ENCODE measurements at regions of chr15 and their contacts with region 1.

Region 1: DNA sequence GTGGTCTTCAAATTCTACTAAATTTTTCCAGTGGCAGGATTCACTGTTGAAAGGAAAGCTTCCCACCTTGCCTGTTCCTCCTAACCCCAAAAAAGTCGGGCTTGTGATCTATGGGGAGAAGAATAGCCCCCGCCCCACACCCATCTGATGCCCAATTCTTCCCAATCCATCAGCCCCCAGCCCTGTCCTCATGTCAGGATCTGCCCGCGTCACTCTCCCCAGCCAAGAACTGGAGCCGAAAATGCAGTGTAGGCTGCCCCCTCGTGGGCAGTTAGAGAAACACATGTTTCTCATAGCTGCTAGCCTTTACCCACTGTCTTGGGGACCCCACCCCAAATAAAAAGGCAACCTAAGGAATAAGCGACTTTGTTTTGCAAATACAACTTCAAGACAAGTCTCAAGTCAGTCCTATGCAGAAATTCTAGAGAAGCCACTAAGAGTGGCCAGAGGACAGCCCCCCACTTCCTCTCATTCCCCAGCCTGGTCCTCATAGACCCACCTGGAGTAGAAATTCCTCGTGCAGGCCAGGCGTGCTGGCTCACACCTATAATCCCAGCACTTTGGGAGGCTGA is 13.0 kb upstream of the CSK start:
- DNase-seq: peak; percentile 57 to 83 (median 68)
- ATAC-seq: peak; percentile 38 to 65 (median 56)
- H3K4me3 ChIP-seq: peak overlapping the region in 2 of 12 donors; percentile 20 to 27
- H3K27ac ChIP-seq: no peak overlapping the region
- H3K4me1 ChIP-seq: peaks cover 0 to 16% (median 3%) of the 10 kb centered on the region in 12 donors
- H3K27me3 ChIP-seq: peaks cover 0 to 6% (median 0%) of the 10 kb centered on the region in 9 donors
- CTCF ChIP-seq: peak; percentile 73 to 92 (median 84)
- POLR2A ChIP-seq: no peak

Region 2: GRCh38 chr15:74382004-74382816 is 386.6 kb before region 1 on chr15:
- intact Hi-C with region 1: loop called in 7 of 10 experiments (anchors 5 to 10 kb)
- DNase-seq: peak; percentile 82 to 90 (median 85)
- ATAC-seq: peak; percentile 71 to 87 (median 85)
- H3K4me3 ChIP-seq: no peak overlapping the region
- H3K27ac ChIP-seq: no peak overlapping the region
- H3K4me1 ChIP-seq: peaks cover 0 to 49% (median 28%) of the 10 kb centered on the region in 12 donors
- H3K27me3 ChIP-seq: no peaks in the 10 kb centered on the region
- CTCF ChIP-seq: peak; percentile 88 to 99 (median 96)
- POLR2A ChIP-seq: no peak

Region 3: GRCh38 chr15:74540761-74541493 is 227.9 kb before region 1 on chr15 and contains the start of gene ARID3B:
- intact Hi-C with region 1: loop called in 1 of 10 experiments (anchors 10 kb)
- DNase-seq: peak; percentile 98 to 99 (median 98)
- ATAC-seq: peak; percentile 99 to 100 (median 100)
- H3K4me3 ChIP-seq: peak within 1 kb of the TSS; percentile 79 to 99 (median 92)
- H3K27ac ChIP-seq: peak within 1 kb of the TSS in 11 of 12 donors; percentile 62 to 88 (median 79)
- H3K4me1 ChIP-seq: peaks cover 0 to 43% (median 20%) of the 10 kb centered on the region in 12 donors
- H3K27me3 ChIP-seq: no peaks in the 10 kb centered on the region
- CTCF ChIP-seq: no peak
- POLR2A ChIP-seq: peak in 1 of 2 donors; percentile 46
- total RNA-seq, gene ARID3B: 1.3 to 4.3 (median 2.6) TPM

Region 4: GRCh38 chr15:74799856-74800547 is 31.1 kb after region 1 on chr15:
- intact Hi-C with region 1: loop called in 7 of 10 experiments (anchors 1 to 5 kb)
- DNase-seq: peak; percentile 73 to 90 (median 79)
- ATAC-seq: peak; percentile 79 to 91 (median 85)
- H3K4me3 ChIP-seq: peak overlapping the region in 1 of 12 donors; percentile 2
- H3K27ac ChIP-seq: peak overlapping the region in 5 of 12 donors; percentile 35 to 71 (median 60)
- H3K4me1 ChIP-seq: peaks cover 0 to 50% (median 19%) of the 10 kb centered on the region in 12 donors
- H3K27me3 ChIP-seq: no peaks in the 10 kb centered on the region
- CTCF ChIP-seq: peak; percentile 94 to 98 (median 97)
- POLR2A ChIP-seq: no peak

Region 5: DNA sequence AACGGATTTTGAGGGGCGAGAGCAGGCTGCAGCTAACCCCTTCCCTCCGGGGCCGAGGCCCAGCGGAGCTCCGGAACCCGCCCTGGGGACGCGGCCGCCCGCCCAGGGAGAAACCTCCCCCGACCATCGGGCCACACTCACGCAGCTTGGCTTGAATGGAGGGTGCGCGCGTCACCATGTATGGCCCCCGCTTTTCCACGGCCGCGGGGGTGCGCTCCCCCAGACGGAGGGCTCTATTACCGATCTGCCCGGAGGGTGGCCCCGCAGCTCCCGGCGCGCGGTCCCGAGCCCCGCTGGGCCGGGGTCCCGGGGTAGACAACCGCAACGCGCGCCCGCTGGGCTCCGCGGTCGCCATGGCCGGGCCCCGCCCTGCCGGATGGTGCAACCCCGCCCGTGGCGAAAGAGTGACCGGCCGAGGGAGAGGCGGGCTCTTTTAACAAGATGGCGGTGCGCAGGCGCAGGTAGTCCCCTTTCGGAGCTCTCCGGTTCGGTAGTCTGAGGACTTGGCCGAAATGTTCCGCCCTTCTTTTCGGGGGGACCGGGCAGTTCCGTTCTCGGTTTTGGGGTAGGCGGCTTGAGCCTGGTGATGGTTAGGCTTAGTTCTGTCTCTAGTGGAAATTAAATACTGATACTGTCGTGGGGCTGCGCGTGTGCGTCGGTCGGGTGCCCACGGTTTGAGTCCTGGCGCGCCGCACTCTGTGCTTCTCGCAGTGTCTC is 137.7 kb after region 1 on chr15 and contains the start of gene FAM219B:
- intact Hi-C with region 1: loop called in 2 of 10 experiments (anchors 5 kb)
- DNase-seq: peak; percentile 94 to 96 (median 96)
- ATAC-seq: peak; percentile 92 to 96 (median 92)
- H3K4me3 ChIP-seq: peak within 1 kb of the TSS; percentile 62 to 99 (median 86)
- H3K27ac ChIP-seq: peak within 1 kb of the TSS; percentile 90 to 99 (median 96)
- H3K4me1 ChIP-seq: peaks cover 0 to 31% (median 21%) of the 10 kb centered on the region in 12 donors
- H3K27me3 ChIP-seq: no peaks in the 10 kb centered on the region
- CTCF ChIP-seq: peak in 1 of 12 donors; percentile 8
- POLR2A ChIP-seq: peak; percentile 62 to 92
- total RNA-seq, gene FAM219B: 37.0 to 110 (median 88.8) TPM

Measured in heart left ventricle (tissue), 16 donors.